ENCODE measurements at regions of chr11 and their contacts with region 1.

Region 1: GRCh38 chr11:57667736-57668435 is at the start of gene ZDHHC5:
- DNase-seq: peak; percentile 100
- H3K4me3 ChIP-seq: peak within 1 kb of the TSS; percentile 93 to 96 (median 94)
- H3K27ac ChIP-seq: peak within 1 kb of the TSS; percentile 97 to 99 (median 98)
- H3K4me1 ChIP-seq: peaks cover 28 to 43% (median 35%) of the 10 kb centered on the region in 4 donors
- H3K27me3 ChIP-seq: no peaks in the 10 kb centered on the region
- CTCF ChIP-seq: peak; percentile 51 to 56 (median 52)
- EP300 ChIP-seq: no peak
- POLR2A ChIP-seq: peak; percentile 30
- total RNA-seq, gene ZDHHC5: 36.5 to 57.7 (median 47.8) TPM

Region 2: GRCh38 chr11:57324886-57325734 is 342.8 kb before region 1 on chr11 and contains the start of gene TNKS1BP1:
- intact Hi-C with region 1: loop called (anchors 10 kb)
- DNase-seq: peak; percentile 99
- H3K4me3 ChIP-seq: peak within 1 kb of the TSS; percentile 79 to 91 (median 89)
- H3K27ac ChIP-seq: peak within 1 kb of the TSS; percentile 94 to 98 (median 98)
- H3K4me1 ChIP-seq: peaks cover 44 to 56% (median 55%) of the 10 kb centered on the region in 4 donors
- H3K27me3 ChIP-seq: no peaks in the 10 kb centered on the region
- CTCF ChIP-seq: no peak
- EP300 ChIP-seq: no peak
- POLR2A ChIP-seq: peak; percentile 70
- total RNA-seq, gene TNKS1BP1: 93.9 to 215 (median 124) TPM

Region 3: GRCh38 chr11:57480409-57481137 is 187.3 kb before region 1 on chr11:
- intact Hi-C with region 1: no loop called
- DNase-seq: no peak
- H3K4me3 ChIP-seq: no peak overlapping the region
- H3K27ac ChIP-seq: no peak overlapping the region
- H3K4me1 ChIP-seq: peaks cover 21 to 34% (median 31%) of the 10 kb centered on the region in 4 donors
- H3K27me3 ChIP-seq: peaks cover 0 to 55% (median 16%) of the 10 kb centered on the region in 4 donors
- CTCF ChIP-seq: peak; percentile 52 to 76 (median 61)
- EP300 ChIP-seq: no peak
- POLR2A ChIP-seq: no peak

Region 4: DNA sequence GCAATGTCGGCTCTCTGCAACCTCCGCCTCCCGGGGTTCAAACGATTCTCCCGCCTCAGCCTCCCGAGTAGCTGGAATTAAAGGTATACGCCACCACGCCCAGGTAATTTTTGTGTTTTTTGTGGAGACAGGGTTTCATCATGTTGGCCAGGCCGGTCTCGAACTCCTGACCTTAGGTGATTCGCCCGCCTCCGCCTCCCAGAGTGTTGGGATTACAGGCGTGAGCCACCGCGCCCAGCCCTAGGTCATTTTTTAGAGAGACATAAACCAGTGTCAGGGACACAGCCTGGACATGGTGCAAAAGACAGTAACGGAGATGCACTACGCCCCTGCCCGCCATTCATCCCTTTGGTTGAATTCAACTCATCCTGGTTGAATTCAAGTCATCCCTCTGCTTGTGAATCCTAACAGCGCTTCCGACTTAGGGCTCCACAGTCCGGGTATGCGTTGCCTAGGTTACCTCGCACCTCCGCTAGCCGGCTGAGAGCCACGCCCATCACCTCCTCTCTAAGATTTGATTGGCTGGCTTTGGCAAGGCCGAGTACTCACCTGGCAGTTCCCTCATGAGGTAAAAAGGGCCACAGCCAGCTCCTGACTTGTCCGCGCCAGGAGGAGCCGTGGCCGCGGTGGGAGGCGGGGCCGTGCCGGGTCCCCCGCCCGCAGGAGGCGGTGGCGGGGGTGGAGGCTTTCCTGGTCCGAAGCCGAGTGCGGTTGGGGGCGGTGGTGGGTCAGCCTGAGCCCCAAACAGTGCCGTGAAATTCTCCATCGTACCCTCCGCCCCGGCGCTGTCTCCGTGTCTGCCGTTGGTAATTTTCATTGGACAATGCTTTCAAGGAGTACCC is 43.7 kb after region 1 on chr11 and contains the start of gene MED19:
- intact Hi-C with region 1: loop called (anchors 2 kb)
- DNase-seq: peak; percentile 97
- H3K4me3 ChIP-seq: peak within 1 kb of the TSS; percentile 88 to 98 (median 90)
- H3K27ac ChIP-seq: peak within 1 kb of the TSS; percentile 89 to 96 (median 92)
- H3K4me1 ChIP-seq: peaks cover 33 to 44% (median 39%) of the 10 kb centered on the region in 4 donors
- H3K27me3 ChIP-seq: no peaks in the 10 kb centered on the region
- CTCF ChIP-seq: no peak
- EP300 ChIP-seq: no peak
- POLR2A ChIP-seq: no peak
- total RNA-seq, gene MED19: 5.8 to 26.1 (median 11.8) TPM

Region 5: GRCh38 chr11:58579192-58580129 is 911.6 kb after region 1 on chr11:
- intact Hi-C with region 1: loop called (anchors 10 kb)
- DNase-seq: peak; percentile 97
- H3K4me3 ChIP-seq: peak overlapping the region; percentile 85 to 98 (median 95)
- H3K27ac ChIP-seq: peak overlapping the region; percentile 99 to 100 (median 100)
- H3K4me1 ChIP-seq: peaks cover 57 to 73% (median 72%) of the 10 kb centered on the region in 4 donors
- H3K27me3 ChIP-seq: no peaks in the 10 kb centered on the region
- CTCF ChIP-seq: peak; percentile 74 to 78 (median 75)
- EP300 ChIP-seq: no peak
- POLR2A ChIP-seq: peak; percentile 47

Measured in esophagus muscularis mucosa (tissue), 4 donors.